ENCODE measurements at regions of chr10 and their contacts with region 1.

Region 1: DNA sequence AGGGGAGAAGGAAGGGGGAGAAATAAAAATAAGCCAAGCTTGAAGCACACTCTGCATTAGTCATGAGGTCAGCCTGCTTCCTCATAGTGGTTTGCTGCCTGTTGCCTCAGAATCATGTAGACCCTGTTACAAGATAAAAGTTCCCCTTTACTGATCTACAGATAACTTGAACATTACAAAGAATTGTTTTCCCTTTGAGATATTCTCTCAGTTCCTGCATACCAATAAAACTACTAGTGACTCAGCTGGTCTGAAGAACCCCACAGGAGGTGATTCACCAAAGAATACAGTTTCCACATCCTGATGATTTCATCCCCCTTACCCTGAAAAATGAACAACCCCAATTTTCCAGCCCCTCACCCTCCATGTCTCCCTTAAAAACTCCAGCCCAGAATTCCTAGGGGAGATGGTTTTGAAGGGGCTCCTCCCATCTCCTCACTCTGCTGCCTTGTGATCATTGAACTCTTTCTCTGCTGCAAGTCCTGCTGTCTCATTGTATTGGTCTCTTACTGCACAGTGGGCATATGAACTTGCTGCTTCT is 31.5 kb upstream of the NRP1 start:
- DNase-seq: peak; percentile 53
- H3K4me3 Mint-ChIP-seq: no peak overlapping the region
- H3K27ac Mint-ChIP-seq: no peak overlapping the region
- H3K4me1 Mint-ChIP-seq: peaks cover 18% of the 10 kb centered on the region
- H3K27me3 Mint-ChIP-seq: peaks cover 22% of the 10 kb centered on the region

Region 2: GRCh38 chr10:33211106-33211878 is 154.6 kb before region 1 on chr10:
- CTCF ChIA-PET with region 1: no interaction called
- intact Hi-C with region 1: loop called (anchors 5 kb)
- DNase-seq: peak; percentile 65
- H3K4me3 Mint-ChIP-seq: no peak overlapping the region
- H3K27ac Mint-ChIP-seq: peak overlapping the region; percentile 55
- H3K4me1 Mint-ChIP-seq: peaks cover 20% of the 10 kb centered on the region
- H3K27me3 Mint-ChIP-seq: no peaks in the 10 kb centered on the region

Region 3: GRCh38 chr10:33376976-33377657 is 11.2 kb after region 1 on chr10:
- CTCF ChIA-PET with region 1: interaction called, 4 read pairs
- intact Hi-C with region 1: loop called (anchors 1 kb)
- DNase-seq: no peak
- H3K4me3 Mint-ChIP-seq: no peak overlapping the region
- H3K27ac Mint-ChIP-seq: no peak overlapping the region
- H3K4me1 Mint-ChIP-seq: peaks cover 22% of the 10 kb centered on the region
- H3K27me3 Mint-ChIP-seq: peaks cover 4% of the 10 kb centered on the region

Region 4: GRCh38 chr10:34280599-34281374 is 914.8 kb after region 1 on chr10:
- CTCF ChIA-PET with region 1: no interaction called
- intact Hi-C with region 1: loop called (anchors 5 kb)
- DNase-seq: peak; percentile 23
- H3K4me3 Mint-ChIP-seq: no peak overlapping the region
- H3K27ac Mint-ChIP-seq: peak overlapping the region; percentile 68
- H3K4me1 Mint-ChIP-seq: peaks cover 30% of the 10 kb centered on the region
- H3K27me3 Mint-ChIP-seq: peaks cover 6% of the 10 kb centered on the region

Region 5: DNA sequence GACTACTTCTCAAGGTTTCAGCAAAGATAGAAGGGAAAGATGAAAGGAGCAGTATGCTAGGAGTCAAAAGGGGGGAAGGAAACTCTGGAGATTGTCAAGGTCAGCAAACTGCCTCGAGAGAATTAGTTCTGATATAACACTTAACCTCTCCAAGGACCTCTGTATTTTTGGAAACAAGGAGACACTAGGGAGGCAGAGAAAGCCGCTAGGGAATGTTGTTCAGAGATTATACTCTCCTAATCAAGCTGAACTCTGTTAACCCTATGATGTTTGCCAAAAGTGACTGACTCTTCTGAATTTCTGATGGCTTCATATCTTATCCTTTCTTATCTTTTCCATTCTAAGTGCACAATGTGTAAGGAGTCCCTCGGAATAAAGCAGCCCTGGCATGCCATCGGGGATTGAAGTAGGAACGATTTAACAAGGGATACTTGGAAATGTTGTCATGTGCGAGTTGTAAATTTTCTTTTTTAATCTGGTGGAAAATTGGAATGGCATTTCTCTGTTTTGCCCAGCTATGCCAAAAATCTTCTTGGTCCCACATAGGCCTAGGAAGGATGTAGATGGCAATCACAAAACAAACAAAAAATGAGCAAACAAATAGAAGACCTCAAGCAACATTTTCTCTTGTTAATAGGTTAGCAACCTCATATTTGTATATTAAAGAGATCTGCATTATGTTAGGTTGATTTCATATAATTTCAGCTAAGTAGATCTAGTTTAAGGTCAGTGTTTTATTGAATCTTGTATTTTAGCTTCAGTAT is 1788.0 kb after region 1 on chr10:
- CTCF ChIA-PET with region 1: no interaction called
- intact Hi-C with region 1: no loop called
- DNase-seq: no peak
- H3K4me3 Mint-ChIP-seq: no peak overlapping the region
- H3K27ac Mint-ChIP-seq: no peak overlapping the region
- H3K4me1 Mint-ChIP-seq: peaks cover 36% of the 10 kb centered on the region
- H3K27me3 Mint-ChIP-seq: no peaks in the 10 kb centered on the region